Caco-2 (cell line): ENCODE measurements at regions of chr6 and their contacts with region 1.

Region 1: DNA sequence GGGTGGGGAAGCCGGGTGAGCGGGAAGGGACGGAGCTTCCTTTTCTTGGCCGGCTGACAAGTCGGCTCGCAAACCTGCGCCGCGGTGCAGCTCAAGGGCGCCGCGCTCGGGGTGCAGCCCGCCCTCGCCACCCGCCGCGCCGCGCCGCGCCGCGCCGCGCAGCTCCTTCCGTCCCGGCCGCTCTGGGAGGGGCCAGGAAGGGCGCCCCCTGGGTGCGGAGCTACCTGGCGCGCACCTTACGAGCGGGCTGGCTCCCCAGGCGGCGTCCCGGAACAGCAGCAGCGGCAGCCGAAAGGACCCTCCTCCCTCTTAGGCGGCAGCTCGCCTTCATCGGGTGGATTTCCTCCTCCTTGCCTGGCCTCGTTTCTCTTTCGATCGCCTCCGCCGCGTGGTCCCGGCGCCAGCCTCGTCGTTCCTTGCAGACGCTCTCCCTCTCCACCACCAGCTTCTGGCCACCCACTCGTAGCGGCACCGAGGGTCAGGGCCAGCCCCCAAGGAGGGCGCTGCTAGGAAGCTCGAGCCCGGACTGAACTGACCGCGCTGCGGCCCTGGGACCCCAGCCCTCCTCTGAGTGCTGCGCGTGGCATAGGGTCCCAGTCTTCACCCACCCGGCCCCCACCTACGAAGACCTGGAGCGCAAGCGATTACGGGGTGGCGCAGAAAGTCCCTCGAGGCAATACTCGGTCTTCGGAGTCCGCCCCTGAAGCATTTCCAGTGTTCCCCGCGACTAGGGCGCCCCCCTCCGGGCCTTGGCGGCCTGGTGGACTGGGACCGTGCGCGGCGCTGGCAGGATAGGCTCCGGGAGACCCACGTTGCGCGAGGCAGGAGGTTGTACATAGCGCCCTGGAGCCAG is at the start of gene MAP3K5:
- DNase-seq: peak; percentile 83 to 94
- H3K4me3 ChIP-seq: peak within 1 kb of the TSS; percentile 60
- H3K4me3 Mint-ChIP-seq: peak within 1 kb of the TSS; percentile 99
- H3K27ac Mint-ChIP-seq: peak within 1 kb of the TSS; percentile 89
- H3K4me1 ChIP-seq: no peaks in the 10 kb centered on the region
- H3K4me1 Mint-ChIP-seq: no peaks in the 10 kb centered on the region
- H3K27me3 ChIP-seq: no peaks in the 10 kb centered on the region
- H3K27me3 Mint-ChIP-seq: no peaks in the 10 kb centered on the region
- CTCF ChIP-seq: peak; percentile 45 to 89
- total RNA-seq, gene MAP3K5: 2.1 and 2.3 TPM in 2 replicates

Region 2: DNA sequence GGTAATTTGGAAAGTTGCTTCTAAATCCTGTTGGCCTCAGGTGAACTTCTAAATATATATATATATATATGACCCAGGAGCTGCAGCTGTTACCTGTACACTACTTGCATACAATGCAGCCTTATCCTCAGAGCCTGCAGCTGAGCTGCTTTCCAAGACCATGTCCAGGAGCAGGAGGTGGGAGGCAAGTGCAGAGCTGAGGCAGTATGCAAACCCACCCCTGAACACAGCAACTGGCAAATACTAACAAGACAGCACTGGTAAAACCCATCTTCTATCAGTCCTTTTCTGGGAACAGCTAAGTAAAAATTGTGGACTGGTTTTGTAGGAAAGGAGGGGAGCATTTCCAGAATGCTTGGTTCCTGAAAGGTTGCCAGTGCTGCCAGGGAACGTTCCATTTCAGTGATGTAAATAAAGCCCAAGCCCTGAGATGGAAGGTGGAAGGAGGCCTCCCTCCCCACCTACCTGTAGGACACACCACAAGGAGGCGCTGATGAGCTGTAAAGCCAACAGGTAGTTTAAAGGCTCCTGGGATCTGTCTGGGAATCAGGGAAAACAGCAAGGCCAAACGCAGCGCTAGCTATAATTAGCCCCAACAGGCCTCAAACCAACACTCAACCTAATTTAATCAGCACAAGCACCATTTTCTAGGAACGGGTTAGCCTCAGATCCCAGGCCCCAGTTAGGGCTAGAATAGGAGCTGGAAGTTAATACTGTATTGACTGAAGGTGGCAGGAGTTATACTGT is 148.6 kb before region 1 on chr6:
- CTCF ChIA-PET with region 1: interaction called, 188 read pairs
- POLR2A ChIA-PET with region 1: interaction called, 8 read pairs
- intact Hi-C with region 1: loop called (anchors 1 kb)
- DNase-seq: peak; percentile 83 to 87
- H3K4me3 ChIP-seq: no peak overlapping the region
- H3K4me3 Mint-ChIP-seq: no peak overlapping the region
- H3K27ac Mint-ChIP-seq: no peak overlapping the region
- H3K4me1 ChIP-seq: peaks cover 5% of the 10 kb centered on the region; the same call in 1 of the 2 replicates
- H3K4me1 Mint-ChIP-seq: no peaks in the 10 kb centered on the region
- H3K27me3 ChIP-seq: no peaks in the 10 kb centered on the region
- H3K27me3 Mint-ChIP-seq: no peaks in the 10 kb centered on the region
- CTCF ChIP-seq: peak; percentile 85 to 93

Region 3: GRCh38 chr6:136657666-136658065 is 135.0 kb before region 1 on chr6:
- CTCF ChIA-PET with region 1: interaction called, 9 read pairs
- POLR2A ChIA-PET with region 1: no interaction called
- intact Hi-C with region 1: loop called (anchors 5 kb)
- DNase-seq: peak; percentile 44 to 55
- H3K4me3 ChIP-seq: no peak overlapping the region
- H3K4me3 Mint-ChIP-seq: no peak overlapping the region
- H3K27ac Mint-ChIP-seq: peak overlapping the region; percentile 1
- H3K4me1 ChIP-seq: peaks cover 16% of the 10 kb centered on the region
- H3K4me1 Mint-ChIP-seq: peaks cover 6% of the 10 kb centered on the region
- H3K27me3 ChIP-seq: no peaks in the 10 kb centered on the region
- H3K27me3 Mint-ChIP-seq: no peaks in the 10 kb centered on the region
- CTCF ChIP-seq: no peak

Region 4: GRCh38 chr6:136769124-136769523 is 23.5 kb before region 1 on chr6:
- CTCF ChIA-PET with region 1: no interaction called
- POLR2A ChIA-PET with region 1: no interaction called
- intact Hi-C with region 1: no loop called
- DNase-seq: no peak
- H3K4me3 ChIP-seq: no peak overlapping the region
- H3K4me3 Mint-ChIP-seq: no peak overlapping the region
- H3K27ac Mint-ChIP-seq: no peak overlapping the region
- H3K4me1 ChIP-seq: no peaks in the 10 kb centered on the region
- H3K4me1 Mint-ChIP-seq: peaks cover 8% of the 10 kb centered on the region
- H3K27me3 ChIP-seq: no peaks in the 10 kb centered on the region
- H3K27me3 Mint-ChIP-seq: no peaks in the 10 kb centered on the region
- CTCF ChIP-seq: no peak

Region 5: DNA sequence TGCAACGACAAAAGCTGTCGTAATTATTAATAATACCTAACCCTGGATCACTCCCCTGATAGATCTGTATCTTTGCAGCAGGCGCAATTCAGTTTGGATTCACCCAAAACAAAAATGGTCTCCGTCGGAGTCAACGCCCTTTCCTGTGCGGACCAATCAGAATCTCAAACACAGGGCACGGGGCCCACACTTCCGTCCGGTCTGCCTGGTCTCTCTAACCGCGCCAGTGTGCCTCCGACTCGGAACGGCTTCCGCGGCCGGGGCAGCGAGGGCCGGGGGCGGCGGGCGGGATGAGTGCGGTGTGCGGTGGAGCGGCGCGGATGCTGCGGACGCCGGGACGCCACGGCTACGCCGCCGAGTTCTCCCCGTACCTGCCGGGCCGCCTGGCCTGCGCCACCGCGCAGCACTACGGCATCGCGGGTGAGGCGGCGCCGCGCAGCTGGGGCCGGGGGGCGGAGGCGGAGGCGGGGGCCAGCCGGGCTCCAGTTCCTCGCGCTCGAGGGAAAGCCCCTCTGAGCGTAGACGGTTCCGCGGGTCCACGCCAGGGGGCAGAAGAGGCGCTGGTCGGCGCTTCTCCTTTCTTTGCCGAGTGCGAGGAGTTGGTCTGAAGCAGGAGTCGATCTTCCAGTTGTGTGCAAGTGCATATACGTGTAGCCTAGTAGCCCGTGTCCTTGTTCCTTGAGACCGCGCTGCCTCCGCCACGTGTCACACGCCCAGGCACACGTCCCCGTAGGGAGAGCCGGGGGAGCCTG is 29.9 kb after region 1 on chr6 and contains the start of gene PEX7:
- CTCF ChIA-PET with region 1: interaction called, 13 read pairs
- POLR2A ChIA-PET with region 1: no interaction called
- intact Hi-C with region 1: no loop called
- DNase-seq: peak; percentile 90
- H3K4me3 ChIP-seq: peak within 1 kb of the TSS; percentile 56
- H3K4me3 Mint-ChIP-seq: peak within 1 kb of the TSS; percentile 98
- H3K27ac Mint-ChIP-seq: peak within 1 kb of the TSS; percentile 97
- H3K4me1 ChIP-seq: peaks cover 8% of the 10 kb centered on the region; the same call in 1 of the 2 replicates
- H3K4me1 Mint-ChIP-seq: peaks cover 7% of the 10 kb centered on the region
- H3K27me3 ChIP-seq: no peaks in the 10 kb centered on the region; the same call in 1 of the 2 replicates
- H3K27me3 Mint-ChIP-seq: peaks cover 4% of the 10 kb centered on the region
- CTCF ChIP-seq: peak; percentile 53 to 65
- total RNA-seq, gene PEX7: 6.1 and 6.4 TPM in 2 replicates

Region 6: GRCh38 chr6:136866872-136867416 is 74.3 kb after region 1 on chr6:
- CTCF ChIA-PET with region 1: no interaction called
- POLR2A ChIA-PET with region 1: no interaction called
- intact Hi-C with region 1: no loop called
- DNase-seq: no peak
- H3K4me3 ChIP-seq: no peak overlapping the region
- H3K4me3 Mint-ChIP-seq: no peak overlapping the region
- H3K27ac Mint-ChIP-seq: no peak overlapping the region
- H3K4me1 ChIP-seq: no peaks in the 10 kb centered on the region
- H3K4me1 Mint-ChIP-seq: no peaks in the 10 kb centered on the region
- H3K27me3 ChIP-seq: no peaks in the 10 kb centered on the region
- H3K27me3 Mint-ChIP-seq: no peaks in the 10 kb centered on the region
- CTCF ChIP-seq: no peak